ENCODE measurements at regions of chr9 and their contacts with region 1.

Region 1: DNA sequence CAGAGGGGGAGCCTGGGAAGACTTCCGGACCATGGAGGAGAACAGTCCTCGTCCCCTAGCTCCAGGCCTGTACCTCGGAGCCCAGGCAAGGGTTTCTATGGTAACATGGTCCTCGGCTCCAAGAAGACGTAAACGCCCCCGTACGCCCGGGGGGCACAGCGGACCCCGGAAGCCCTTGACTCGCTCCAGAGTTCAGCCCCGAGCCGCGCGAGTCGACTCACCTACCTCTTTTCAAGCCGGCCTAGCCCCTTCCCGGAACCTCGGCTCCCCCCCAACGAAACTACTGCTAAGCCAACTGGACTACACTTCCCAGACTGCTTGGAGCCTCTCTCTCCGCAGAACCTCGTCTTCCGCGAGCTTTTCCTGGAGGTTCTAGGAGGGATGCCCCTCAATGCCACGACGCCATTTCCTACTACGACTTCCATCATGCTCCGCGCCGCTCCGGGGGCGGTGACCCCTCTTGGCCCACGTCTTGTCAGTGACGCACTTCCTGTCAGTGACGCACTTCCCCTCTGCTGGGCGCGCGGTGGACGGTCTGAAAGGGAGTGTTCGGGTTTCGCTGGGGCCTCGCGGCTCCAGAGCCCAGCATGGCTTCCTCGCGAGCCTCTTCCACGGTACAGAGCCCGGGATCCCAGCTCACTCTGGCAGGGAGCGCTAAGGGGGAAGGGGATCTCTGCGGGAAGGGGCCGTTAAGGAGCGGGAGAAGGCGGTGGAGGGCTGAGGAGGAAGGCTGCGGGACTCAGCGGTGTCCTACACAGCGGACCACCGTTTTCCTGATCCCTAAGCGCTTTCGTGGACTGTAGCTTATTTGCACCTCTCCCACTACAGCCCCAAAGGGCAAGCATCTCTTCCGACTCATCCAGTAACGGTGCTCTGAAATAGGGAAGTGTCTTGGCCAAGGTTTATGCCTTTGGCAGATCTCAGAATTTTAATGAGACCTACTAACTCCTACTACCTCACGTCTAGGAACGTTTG is at the starts of genes CDC26 and PRPF4:
- DNase-seq: peak; percentile 89 to 99
- H3K4me3 ChIP-seq: peak within 1 kb of the TSS; percentile 79 to 81
- H3K27ac ChIP-seq: peak within 1 kb of the TSS; percentile 91 to 93
- H3K4me1 ChIP-seq: peaks cover 3 to 15% of the 10 kb centered on the region in 2 donors
- H3K27me3 ChIP-seq: no peaks in the 10 kb centered on the region
- CTCF ChIP-seq: no peak
- total RNA-seq, gene CDC26: 1.2 TPM
- total RNA-seq, gene PRPF4: 5.4 TPM

Region 2: GRCh38 chr9:112620388-112620787 is 655.1 kb before region 1 on chr9:
- intact Hi-C with region 1: no loop called
- DNase-seq: no peak
- H3K4me3 ChIP-seq: no peak overlapping the region
- H3K27ac ChIP-seq: no peak overlapping the region
- H3K4me1 ChIP-seq: no peaks in the 10 kb centered on the region
- H3K27me3 ChIP-seq: no peaks in the 10 kb centered on the region
- CTCF ChIP-seq: no peak

Region 3: DNA sequence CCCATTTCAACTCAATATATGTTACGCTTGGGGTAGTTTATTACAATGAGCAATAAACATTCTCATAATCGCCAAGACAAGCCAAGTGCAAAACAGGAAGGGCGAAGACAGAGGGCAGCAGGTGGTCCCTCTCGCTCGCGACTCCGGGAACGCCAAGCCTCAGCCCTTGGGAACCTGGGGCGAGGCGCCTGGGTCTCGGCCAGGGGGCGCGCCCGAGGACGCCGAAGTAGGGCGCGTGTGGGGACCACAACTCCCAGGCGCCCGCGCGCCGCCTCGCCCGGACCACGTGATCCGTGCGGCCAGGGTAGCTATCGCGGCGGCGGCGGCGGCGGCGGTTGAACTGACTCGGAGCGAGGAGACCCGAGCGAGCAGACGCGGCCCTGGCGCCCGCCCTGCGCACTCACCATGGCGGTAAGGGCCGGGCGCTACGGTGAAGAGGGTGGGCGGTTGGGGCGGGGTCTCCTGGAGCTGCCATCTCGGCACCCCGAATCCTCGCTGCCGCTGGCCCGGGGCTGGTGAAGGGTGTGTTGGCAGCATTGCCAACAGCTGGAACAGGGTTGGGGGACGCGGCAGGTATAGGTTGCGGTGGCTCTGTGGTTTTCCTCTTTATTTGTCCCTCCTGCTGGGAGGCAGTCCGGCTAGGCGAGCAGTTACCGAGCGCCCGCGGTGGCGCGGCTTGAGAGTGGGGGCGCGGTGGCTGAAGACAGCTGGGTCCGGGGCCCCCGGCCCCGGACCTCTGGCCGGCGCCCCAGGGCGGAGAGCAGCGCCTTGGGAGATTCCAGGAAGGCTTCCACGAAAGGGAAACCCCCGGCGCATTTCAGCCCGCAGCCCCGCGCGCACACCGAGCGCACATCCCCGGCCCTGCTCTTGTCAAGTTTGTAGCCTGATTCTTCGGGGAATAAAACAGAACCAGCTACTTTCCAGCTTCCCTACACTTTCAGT is 124.5 kb before region 1 on chr9 and contains the start of gene SLC31A2:
- intact Hi-C with region 1: loop called (anchors 2 kb)
- DNase-seq: peak; percentile 56 to 93
- H3K4me3 ChIP-seq: peak within 1 kb of the TSS; percentile 83 to 95
- H3K27ac ChIP-seq: peak within 1 kb of the TSS; percentile 68 to 82
- H3K4me1 ChIP-seq: peaks cover 0 to 9% of the 10 kb centered on the region in 2 donors
- H3K27me3 ChIP-seq: no peaks in the 10 kb centered on the region
- CTCF ChIP-seq: peak in 2 of 3 experiments; percentile 28 to 41
- total RNA-seq, gene SLC31A2: 7.2 TPM

Region 4: GRCh38 chr9:113340017-113340699 is 64.7 kb after region 1 on chr9 and contains the start of gene WDR31:
- intact Hi-C with region 1: loop called (anchors 1 kb)
- DNase-seq: peak; percentile 24 to 92
- H3K4me3 ChIP-seq: peak within 1 kb of the TSS; percentile 70 to 76
- H3K27ac ChIP-seq: peak within 1 kb of the TSS; percentile 62 to 72
- H3K4me1 ChIP-seq: peaks cover 0 to 7% of the 10 kb centered on the region in 2 donors
- H3K27me3 ChIP-seq: no peaks in the 10 kb centered on the region
- CTCF ChIP-seq: peak in 1 of 3 experiments; percentile 4
- total RNA-seq, gene WDR31: 0.21 TPM

Region 5: GRCh38 chr9:113410207-113410864 is 134.9 kb after region 1 on chr9 and contains the starts of genes C9orf43 and POLE3:
- intact Hi-C with region 1: loop called (anchors 1 kb)
- DNase-seq: peak; percentile 78 to 97
- H3K4me3 ChIP-seq: peak within 1 kb of the TSS; percentile 79 to 82
- H3K27ac ChIP-seq: peak within 1 kb of the TSS; percentile 96 to 98
- H3K4me1 ChIP-seq: peaks cover 3 to 8% of the 10 kb centered on the region in 2 donors
- H3K27me3 ChIP-seq: no peaks in the 10 kb centered on the region
- CTCF ChIP-seq: peak in 1 of 3 experiments; percentile 2
- total RNA-seq, gene C9orf43: not detected
- total RNA-seq, gene POLE3: 17.5 TPM

Region 6: DNA sequence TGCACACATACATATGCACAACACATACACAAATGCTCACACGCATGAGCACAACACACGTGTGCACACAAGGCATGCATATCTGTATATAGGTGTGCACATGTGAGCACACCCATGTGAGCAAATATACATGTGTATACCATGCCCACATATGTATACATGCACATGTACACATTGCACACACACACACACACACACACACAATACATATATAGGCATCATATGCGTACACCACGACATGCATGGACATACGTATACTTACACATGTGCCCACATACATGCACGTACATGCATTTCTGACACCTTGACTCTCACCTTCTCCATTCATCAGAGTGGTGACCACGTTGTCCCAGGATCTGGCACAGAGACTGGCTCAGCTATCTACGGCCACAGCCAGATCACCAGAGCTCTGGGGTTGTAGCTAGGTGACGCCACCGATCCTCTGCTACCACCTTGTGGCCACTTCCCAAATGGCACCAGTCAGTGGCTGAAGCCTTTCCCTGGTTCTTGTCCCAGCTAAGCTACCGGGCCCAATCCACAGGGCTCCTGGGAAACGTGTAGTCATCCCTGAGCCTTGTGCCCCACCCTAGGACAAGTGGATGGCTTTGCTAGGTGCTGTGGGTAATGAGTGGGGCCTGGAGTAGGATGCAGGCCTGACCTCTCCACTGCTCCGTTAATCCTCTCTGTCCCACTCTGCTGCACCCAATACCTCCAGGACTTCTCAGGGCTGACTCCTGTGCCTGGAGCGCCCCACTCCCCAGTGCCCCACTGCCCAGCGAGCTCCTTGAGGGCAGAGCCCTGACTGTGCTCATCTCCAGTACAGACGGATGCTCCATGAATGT is 382.5 kb after region 1 on chr9:
- intact Hi-C with region 1: loop called (anchors 2 kb)
- DNase-seq: peak; percentile 24 to 91
- H3K4me3 ChIP-seq: no peak overlapping the region
- H3K27ac ChIP-seq: no peak overlapping the region
- H3K4me1 ChIP-seq: peaks cover 5 to 13% of the 10 kb centered on the region in 2 donors
- H3K27me3 ChIP-seq: no peaks in the 10 kb centered on the region
- CTCF ChIP-seq: peak; percentile 94 to 97 (median 95)

Measured in ascending aorta (tissue), 2 donors.